IMR-90 (cell line): ENCODE measurements at regions of chr11 and their contacts with region 1.

Region 1: DNA sequence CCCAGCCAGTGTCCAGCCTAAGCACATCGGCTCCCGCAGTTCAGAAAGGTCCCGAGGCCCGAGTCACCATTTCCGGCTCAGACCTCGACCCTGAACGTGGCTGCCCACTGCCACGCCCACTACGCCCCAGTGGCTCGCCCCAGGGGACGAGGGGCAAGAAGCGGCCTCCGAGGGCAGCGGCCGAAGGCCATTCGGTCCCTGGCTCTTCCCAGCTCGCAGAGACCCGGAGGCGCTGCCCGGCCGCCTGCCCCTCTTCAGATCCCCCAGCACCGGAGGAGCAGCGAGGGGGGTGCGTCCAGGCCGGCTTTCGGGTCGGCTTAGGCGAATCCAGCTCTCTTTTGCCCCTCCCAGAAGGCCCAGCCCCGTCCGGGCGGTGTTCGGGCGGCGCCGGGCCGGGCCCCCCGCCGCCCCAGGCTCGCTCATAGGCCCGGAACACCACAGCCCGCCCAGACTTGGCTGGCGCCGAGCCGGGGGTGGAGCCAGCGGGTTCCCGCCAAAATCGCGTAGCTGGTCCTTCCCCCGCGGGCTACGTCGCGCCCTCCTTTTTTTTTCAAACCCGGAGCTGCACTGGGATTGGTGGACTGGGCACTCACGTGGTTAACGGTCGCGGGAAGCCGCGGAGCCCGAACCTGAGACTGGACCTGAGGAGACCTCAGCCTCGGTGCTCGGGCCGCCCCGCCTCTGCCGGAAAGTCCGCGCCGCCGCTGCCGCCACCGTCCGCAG is at the start of gene WEE1:
- DNase-seq: peak; percentile 98
- ATAC-seq: peak; percentile 88
- H3K4me3 ChIP-seq: peak within 1 kb of the TSS; percentile 76
- H3K27ac ChIP-seq: peak within 1 kb of the TSS; percentile 94
- H3K4me1 ChIP-seq: no peaks in the 10 kb centered on the region
- H3K27me3 ChIP-seq: no peaks in the 10 kb centered on the region
- CTCF ChIP-seq: no peak
- POLR2A ChIP-seq: peak; percentile 91
- RAD21 ChIP-seq: no peak
- total RNA-seq, gene WEE1: 29.2 and 45.5 TPM in 2 replicates

Region 2: DNA sequence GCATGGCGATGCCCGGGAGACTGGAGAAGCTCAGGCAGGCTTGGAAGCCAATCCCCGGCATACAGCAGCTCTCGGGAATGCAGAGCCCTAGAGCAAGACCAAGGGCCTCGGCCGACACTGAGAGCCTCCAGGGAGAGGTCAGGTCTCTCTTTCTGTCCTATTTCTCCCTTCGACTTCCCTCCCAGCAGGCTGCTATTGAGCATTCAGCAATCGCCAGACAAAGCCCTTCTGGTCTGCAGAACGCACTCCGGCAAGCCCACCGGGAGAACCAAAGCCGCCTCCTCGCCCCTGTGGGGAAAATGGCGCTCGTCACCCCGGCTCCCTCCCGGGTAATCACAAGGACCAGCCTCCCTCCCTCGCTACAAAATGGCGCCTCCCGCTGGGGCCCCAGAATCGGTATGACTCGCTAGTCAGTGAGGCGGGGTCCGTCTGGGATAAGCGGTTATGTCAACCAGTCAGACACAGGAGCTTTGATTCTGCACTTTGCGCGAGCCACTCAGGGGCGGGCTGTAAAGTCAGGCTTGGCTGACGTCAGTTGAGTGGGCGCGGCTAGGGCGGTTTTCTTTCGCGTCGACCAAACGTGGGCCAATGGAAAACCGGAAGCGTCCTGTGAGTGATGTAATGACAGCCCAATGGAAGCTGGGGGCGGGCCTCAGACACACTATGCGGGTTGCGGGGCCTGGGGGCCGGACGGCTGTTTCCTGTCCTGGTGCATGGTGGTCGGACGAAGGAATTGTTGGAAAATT is 112.7 kb before region 1 on chr11 and contains the start of gene ZNF143:
- CTCF ChIA-PET with region 1: no interaction called
- POLR2A ChIA-PET with region 1: interaction called, 3 read pairs
- dilution Hi-C with region 1: no loop called
- in situ Hi-C with region 1: no loop called
- intact Hi-C with region 1: loop called (anchors 1 kb)
- DNase-seq: peak; percentile 100
- ATAC-seq: peak; percentile 94
- H3K4me3 ChIP-seq: peak within 1 kb of the TSS; percentile 81
- H3K27ac ChIP-seq: peak within 1 kb of the TSS; percentile 95
- H3K4me1 ChIP-seq: no peaks in the 10 kb centered on the region
- H3K27me3 ChIP-seq: no peaks in the 10 kb centered on the region
- CTCF ChIP-seq: no peak
- POLR2A ChIP-seq: no peak; the same call in 1 of the 2 replicates
- RAD21 ChIP-seq: no peak
- total RNA-seq, gene ZNF143: 49.6 and 58.9 TPM in 2 replicates

Region 3: DNA sequence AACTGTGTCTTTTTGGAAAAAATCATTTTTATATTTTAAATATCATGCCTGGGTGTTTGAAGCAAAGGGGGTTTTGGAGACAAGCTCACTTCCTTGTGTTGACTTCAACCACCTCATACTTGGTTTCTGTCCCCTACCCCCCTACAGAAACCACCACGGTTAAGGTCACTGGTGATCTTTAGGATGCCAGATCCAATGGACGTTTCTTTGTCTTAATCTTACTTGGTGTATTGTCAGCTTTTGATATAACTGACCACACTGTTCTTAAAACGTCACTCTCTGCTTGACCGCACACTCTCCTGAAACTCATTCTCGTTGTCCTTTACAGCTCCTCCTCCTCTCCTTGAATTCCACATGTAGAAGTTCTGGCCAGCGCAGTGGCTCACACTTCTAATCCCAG is 55.9 kb after region 1 on chr11:
- CTCF ChIA-PET with region 1: no interaction called
- POLR2A ChIA-PET with region 1: no interaction called
- dilution Hi-C with region 1: no loop called
- in situ Hi-C with region 1: no loop called
- intact Hi-C with region 1: no loop called
- DNase-seq: no peak
- ATAC-seq: no peak
- H3K4me3 ChIP-seq: no peak overlapping the region
- H3K27ac ChIP-seq: no peak overlapping the region
- H3K4me1 ChIP-seq: peaks cover 3% of the 10 kb centered on the region; the same call in 1 of the 2 replicates
- H3K27me3 ChIP-seq: no peaks in the 10 kb centered on the region
- CTCF ChIP-seq: no peak
- POLR2A ChIP-seq: no peak
- RAD21 ChIP-seq: no peak

Region 4: DNA sequence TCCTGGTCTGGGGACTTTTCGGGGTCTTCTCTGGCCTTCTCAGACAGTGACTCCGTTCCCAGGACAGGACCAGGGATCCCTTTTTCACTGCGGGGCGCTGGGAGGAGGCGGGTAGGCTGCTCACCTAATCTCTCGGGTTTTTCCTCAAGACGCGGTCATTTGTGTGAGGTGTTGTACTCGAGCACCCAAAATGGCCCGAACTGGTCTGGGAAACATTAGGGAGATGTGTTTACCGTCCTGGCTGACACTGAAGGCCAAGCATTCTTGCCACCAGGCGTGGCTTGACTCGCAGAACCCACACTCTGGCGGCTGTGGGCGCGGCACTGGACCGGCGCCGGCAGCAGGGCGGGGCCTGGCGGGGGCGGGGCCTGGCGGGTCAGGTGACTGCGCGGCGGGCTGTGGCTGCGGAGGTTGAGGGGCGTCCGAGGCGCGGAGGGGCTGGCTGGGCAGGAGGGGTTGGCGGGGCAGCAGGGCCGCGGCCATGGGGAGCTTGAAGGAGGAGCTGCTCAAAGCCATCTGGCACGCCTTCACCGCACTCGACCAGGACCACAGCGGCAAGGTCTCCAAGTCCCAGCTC is 90.6 kb after region 1 on chr11 and contains the start of gene SWAP70:
- CTCF ChIA-PET with region 1: no interaction called
- POLR2A ChIA-PET with region 1: no interaction called
- dilution Hi-C with region 1: no loop called
- in situ Hi-C with region 1: no loop called
- intact Hi-C with region 1: loop called (anchors 1 kb)
- DNase-seq: peak; percentile 82
- ATAC-seq: peak; percentile 96
- H3K4me3 ChIP-seq: peak within 1 kb of the TSS; percentile 93
- H3K27ac ChIP-seq: peak within 1 kb of the TSS; percentile 92
- H3K4me1 ChIP-seq: peaks cover 3% of the 10 kb centered on the region; the same call in 1 of the 2 replicates
- H3K27me3 ChIP-seq: no peaks in the 10 kb centered on the region
- CTCF ChIP-seq: peak; percentile 52
- POLR2A ChIP-seq: peak; percentile 31; the same call in 1 of the 2 replicates
- RAD21 ChIP-seq: 0 out of 2 replicates have a peak, but pooled peaks have one; percentile 31
- total RNA-seq, gene SWAP70: 19.9 and 28.9 TPM in 2 replicates

Region 5: DNA sequence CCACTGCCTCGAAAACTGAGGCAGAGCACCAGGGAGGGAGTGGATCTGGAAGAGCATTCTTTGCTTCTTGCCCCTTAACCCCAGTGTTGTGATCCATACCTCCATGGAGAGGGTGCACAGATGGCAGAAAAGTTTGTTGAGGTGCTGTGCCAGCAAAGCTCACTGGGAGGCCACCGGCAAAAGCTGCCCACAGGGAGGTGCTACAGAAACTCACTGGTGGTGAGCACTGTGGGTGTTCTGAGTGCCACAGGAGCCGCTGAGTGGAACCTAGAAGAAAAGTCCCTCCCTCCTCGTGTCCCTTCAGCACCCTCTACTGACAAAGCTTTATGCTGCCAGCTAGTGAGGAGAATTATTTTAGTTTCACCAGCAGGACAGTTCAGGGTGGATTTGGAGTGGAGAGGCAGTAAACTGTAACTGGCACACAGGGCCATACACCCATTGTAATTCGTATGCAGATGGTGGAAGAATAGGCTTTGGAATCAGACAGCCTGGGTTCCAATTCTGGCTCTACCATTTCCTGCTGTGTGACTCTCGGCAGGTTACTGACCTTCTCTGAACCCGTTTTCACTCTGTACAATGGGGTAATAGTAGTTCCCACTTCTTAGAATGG is 175.3 kb after region 1 on chr11:
- CTCF ChIA-PET with region 1: interaction called, 4 read pairs
- POLR2A ChIA-PET with region 1: no interaction called
- dilution Hi-C with region 1: no loop called
- in situ Hi-C with region 1: no loop called
- intact Hi-C with region 1: loop called (anchors 5 kb)
- DNase-seq: peak; percentile 79
- ATAC-seq: peak; percentile 86
- H3K4me3 ChIP-seq: no peak overlapping the region
- H3K27ac ChIP-seq: no peak overlapping the region
- H3K4me1 ChIP-seq: peaks cover 7% of the 10 kb centered on the region
- H3K27me3 ChIP-seq: no peaks in the 10 kb centered on the region
- CTCF ChIP-seq: peak; percentile 79
- POLR2A ChIP-seq: no peak
- RAD21 ChIP-seq: peak; percentile 88

Region 6: DNA sequence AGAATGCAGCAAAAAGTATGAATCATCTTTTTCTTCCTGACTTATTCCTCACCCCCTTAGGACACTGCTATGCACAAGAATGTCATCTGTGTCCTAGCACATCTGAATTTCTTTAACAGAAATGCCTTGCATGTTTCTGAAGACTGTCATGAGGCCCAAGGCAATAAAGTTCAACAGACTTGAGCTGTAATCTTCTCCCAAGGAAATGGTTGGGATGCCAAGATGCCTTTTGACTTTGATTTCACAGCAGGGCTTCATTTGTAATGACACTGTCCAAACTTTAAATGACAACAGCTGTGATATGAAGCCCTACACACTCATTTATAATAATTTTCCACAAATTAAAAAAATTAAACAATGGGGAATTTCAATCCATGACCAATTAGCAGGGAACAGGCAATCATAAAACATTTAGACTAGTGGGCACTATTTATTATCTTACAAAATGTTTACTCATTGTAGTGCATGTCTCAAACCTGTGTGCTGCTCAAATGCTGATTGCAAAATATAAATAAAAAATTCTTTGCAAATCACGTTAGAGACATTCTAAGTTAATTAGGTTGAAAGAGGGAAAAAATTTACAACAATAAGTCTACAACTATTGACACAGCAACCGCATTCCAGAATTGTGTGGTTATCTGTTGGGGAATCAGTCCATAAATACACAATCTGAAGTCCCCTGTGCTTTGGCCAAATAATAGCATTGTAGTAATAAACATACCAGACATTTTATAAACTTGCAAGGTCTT is 333.0 kb after region 1 on chr11:
- CTCF ChIA-PET with region 1: no interaction called
- POLR2A ChIA-PET with region 1: no interaction called
- dilution Hi-C with region 1: no loop called
- in situ Hi-C with region 1: no loop called
- intact Hi-C with region 1: loop called (anchors 2 kb)
- DNase-seq: peak; percentile 94
- ATAC-seq: peak; percentile 92
- H3K4me3 ChIP-seq: no peak overlapping the region
- H3K27ac ChIP-seq: peak overlapping the region; percentile 92; the same call in 1 of the 2 replicates
- H3K4me1 ChIP-seq: peaks cover 11% of the 10 kb centered on the region
- H3K27me3 ChIP-seq: no peaks in the 10 kb centered on the region
- CTCF ChIP-seq: no peak
- POLR2A ChIP-seq: no peak
- RAD21 ChIP-seq: no peak